Activated B cell treated with CpG ODN at 0.5 μM for 24 hours (primary cell): ENCODE measurements at regions of chr6 and their contacts with region 1.

Region 1: GRCh38 chr6:137076277-137077068 is 31.7 kb upstream of the IL20RA start:
- DNase-seq: peak; percentile 39
- ATAC-seq: peak; percentile 100
- H3K4me3 Mint-ChIP-seq: no peak overlapping the region
- H3K27ac Mint-ChIP-seq: no peak overlapping the region
- H3K4me1 Mint-ChIP-seq: peaks cover 2% of the 10 kb centered on the region
- H3K27me3 Mint-ChIP-seq: peaks cover 2% of the 10 kb centered on the region
- CTCF ChIP-seq: peak; percentile 77

Region 2: DNA sequence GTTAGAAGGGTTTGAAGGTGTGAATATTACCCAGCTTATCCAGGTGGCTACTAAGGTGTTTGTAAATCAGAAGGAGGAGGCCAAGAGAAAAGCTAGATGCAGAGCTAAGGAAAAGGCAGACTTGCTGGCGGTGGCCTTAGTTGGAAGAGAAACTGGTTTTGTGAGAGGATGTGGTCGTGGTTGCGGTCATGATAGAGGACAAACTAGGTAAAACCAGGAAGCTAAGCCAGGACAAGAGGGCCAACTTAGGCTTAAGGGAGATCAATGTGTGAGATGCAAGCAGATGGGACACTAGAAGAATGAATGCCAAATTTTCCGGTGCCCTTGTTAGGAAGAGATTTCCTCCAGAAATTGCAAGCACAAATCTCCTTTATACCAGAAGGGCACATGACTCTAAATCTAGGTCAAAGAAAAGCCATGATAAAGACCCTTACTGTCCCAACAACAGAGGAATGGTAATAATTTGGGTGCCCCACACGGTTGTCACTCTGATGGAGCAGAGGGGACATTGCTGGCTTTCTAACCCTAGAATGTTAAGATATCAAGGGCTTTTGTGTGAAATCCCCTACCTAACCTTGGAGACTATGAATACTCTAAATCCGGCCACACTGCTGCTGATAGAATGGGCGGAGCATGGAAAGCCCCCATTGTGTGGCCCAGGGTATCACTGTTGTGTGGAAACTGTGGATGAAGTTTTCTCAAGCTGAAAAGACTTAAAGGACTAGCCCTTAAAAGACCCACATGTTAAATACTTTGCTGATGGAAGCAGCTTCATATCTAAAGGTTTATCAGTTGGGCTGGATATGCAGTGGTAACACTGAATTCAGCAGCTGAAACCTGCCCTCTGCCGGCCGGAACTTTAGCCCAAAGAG is 89.1 kb after region 1 on chr6:
- CTCF ChIA-PET with region 1: interaction called, 10 read pairs
- POLR2A ChIA-PET with region 1: no interaction called
- intact Hi-C with region 1: no loop called
- DNase-seq: peak; percentile 28
- ATAC-seq: peak; percentile 81
- H3K4me3 Mint-ChIP-seq: peak overlapping the region; percentile 45
- H3K27ac Mint-ChIP-seq: peak overlapping the region; percentile 92
- H3K4me1 Mint-ChIP-seq: peaks cover 75% of the 10 kb centered on the region
- H3K27me3 Mint-ChIP-seq: no peaks in the 10 kb centered on the region
- CTCF ChIP-seq: no peak

Region 3: DNA sequence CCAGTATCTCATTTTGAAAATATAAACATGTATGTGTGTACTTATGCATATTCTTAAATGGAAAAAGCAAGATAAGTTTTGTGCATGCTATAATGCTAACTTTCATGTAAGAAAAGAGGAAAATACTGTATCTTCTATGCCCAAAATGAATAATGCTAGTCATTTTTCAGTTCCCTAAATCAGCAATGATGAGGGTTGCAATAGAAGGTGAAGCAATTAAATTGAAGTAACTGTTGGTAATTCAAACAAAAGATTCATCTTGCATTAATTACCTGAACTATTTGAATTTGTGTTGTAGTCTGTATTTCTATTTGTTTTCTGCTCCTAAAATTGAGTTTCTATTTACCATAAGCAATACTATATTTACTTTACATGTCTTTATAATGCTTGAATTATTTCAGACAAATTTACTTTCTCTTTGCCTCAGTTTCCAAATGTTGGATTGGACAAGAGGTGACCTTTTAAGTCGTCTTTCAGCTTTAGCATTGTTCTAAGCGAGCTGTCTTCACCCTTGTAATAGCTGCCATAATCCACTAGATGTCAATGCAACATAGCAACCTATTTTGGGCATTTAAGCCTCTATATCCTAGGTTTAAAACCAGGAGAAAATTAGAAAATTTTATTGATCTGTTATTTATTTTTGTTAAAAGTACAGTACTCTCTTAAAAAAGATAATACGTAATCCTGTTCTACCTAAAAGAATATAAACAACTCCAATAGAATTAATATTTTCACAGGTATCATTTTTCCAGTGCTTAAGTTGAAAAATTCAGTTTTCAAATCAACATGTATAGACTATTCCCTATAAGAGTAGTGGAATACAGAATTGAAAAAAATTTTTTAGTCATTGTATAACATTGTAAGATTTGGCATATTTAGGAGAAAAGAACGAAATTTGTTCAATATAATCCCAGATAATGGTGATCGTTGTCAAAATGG is 195.0 kb after region 1 on chr6:
- CTCF ChIA-PET with region 1: interaction called, 5 read pairs
- POLR2A ChIA-PET with region 1: no interaction called
- intact Hi-C with region 1: loop called (anchors 1 kb)
- DNase-seq: no peak
- ATAC-seq: peak; percentile 75
- H3K4me3 Mint-ChIP-seq: no peak overlapping the region
- H3K27ac Mint-ChIP-seq: no peak overlapping the region
- H3K4me1 Mint-ChIP-seq: peaks cover 20% of the 10 kb centered on the region
- H3K27me3 Mint-ChIP-seq: no peaks in the 10 kb centered on the region
- CTCF ChIP-seq: peak; percentile 61

Region 4: GRCh38 chr6:137432054-137432611 is 355.7 kb after region 1 on chr6:
- CTCF ChIA-PET with region 1: no interaction called
- POLR2A ChIA-PET with region 1: no interaction called
- intact Hi-C with region 1: loop called (anchors 5 kb)
- DNase-seq: no peak
- ATAC-seq: peak; percentile 65
- H3K4me3 Mint-ChIP-seq: peak overlapping the region; percentile 81
- H3K27ac Mint-ChIP-seq: peak overlapping the region; percentile 26
- H3K4me1 Mint-ChIP-seq: peaks cover 40% of the 10 kb centered on the region
- H3K27me3 Mint-ChIP-seq: no peaks in the 10 kb centered on the region
- CTCF ChIP-seq: no peak

Region 5: DNA sequence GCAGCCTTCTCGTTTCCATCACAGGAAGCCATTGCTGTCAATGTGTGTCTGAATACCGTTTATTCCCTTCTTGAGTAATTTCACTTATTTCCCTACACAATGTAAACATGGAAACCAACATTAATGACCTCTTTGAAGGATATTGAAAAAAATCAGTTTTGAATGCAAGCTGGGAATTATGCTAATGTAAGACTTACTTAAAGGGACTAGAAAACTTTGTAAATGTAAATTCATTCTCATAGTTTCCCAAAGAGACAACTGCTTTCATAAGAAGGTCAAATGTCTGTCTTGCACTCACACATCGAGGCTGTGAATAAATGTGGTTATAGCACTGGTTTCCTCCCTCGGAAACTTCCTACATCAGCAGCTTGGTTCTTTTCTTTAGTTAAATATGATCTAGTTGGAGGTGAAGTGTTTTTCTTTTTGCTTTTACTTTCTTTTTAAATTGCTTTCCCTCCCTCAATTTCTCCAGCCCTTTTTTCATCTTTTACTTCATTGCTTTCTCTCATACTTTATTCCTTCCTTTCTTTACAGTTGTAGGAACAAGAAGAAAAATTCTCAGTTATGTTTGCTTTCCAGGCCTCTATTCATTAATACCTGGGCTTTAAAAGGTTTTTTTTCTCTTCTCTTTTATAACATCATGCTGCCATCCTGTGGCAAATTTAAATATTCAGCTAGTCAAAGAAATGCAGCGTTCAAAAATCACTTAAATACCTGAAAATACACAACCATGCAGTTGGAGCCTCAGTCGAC is 898.9 kb after region 1 on chr6:
- CTCF ChIA-PET with region 1: no interaction called
- POLR2A ChIA-PET with region 1: no interaction called
- intact Hi-C with region 1: loop called (anchors 10 kb)
- DNase-seq: no peak
- ATAC-seq: peak; percentile 40
- H3K4me3 Mint-ChIP-seq: peak overlapping the region; percentile 8
- H3K27ac Mint-ChIP-seq: peak overlapping the region; percentile 65
- H3K4me1 Mint-ChIP-seq: peaks cover 17% of the 10 kb centered on the region
- H3K27me3 Mint-ChIP-seq: no peaks in the 10 kb centered on the region
- CTCF ChIP-seq: no peak